Panc1 (cell line): ENCODE measurements at regions of chr2 and their contacts with region 1.

Region 1: DNA sequence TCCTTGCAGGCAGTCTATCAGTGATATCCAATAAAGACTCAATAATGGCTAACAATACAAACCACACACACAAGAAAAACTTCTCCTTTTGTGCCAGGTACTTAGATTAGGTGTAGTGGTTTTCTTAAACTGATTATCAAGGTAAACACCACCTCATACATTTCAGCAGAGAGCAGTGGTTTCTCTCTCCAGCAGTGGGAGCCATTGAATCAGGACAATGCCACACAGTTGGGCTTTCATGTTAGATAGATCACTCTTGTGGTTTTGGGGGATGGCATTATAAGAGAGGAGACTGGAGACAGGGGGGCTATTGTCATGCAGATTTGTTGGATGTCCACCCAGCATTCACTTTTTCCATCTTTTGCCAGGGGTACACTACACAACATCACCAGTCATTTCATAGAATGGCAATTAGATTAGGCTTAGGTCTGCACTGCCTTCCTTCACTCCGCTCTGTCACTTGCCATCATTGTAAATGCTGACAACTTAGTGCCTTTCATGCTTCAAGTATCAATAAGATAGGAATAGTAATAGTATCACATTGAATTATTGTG is 13.6 kb upstream of the IRS1 start:
- DNase-seq: no peak
- ATAC-seq: no peak
- H3K4me3 ChIP-seq: no peak overlapping the region
- H3K27ac ChIP-seq: no peak overlapping the region
- H3K4me1 ChIP-seq: no peaks in the 10 kb centered on the region
- H3K27me3 ChIP-seq: no peaks in the 10 kb centered on the region
- CTCF ChIP-seq: peak; percentile 67

Region 2: DNA sequence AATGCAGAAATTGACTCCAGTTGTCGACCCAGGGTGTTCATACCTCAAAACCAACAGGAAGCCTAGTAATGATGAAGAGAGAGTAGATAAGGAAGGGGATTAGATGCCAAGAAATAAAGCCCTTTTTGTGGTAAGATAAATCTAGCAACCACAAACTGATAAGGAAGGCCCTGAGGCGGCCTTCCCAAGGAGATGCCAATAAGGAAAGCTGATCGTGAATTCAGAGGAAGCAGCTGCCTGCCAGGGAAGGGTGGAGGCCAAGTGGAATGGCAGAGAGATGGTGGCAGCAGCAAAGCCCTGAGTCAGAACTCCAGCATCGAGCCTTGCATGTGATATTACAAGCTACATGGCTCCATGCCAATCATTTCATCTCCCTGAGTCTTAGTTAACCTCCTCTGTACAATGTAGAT is 139.9 kb before region 1 on chr2:
- CTCF ChIA-PET with region 1: no interaction called
- POLR2A ChIA-PET with region 1: no interaction called
- in situ Hi-C with region 1: no loop called
- intact Hi-C with region 1: no loop called
- DNase-seq: no peak
- ATAC-seq: peak; percentile 66
- H3K4me3 ChIP-seq: no peak overlapping the region
- H3K27ac ChIP-seq: no peak overlapping the region; the same call in 1 of the 2 replicates
- H3K4me1 ChIP-seq: no peaks in the 10 kb centered on the region
- H3K27me3 ChIP-seq: no peaks in the 10 kb centered on the region
- CTCF ChIP-seq: no peak

Region 3: DNA sequence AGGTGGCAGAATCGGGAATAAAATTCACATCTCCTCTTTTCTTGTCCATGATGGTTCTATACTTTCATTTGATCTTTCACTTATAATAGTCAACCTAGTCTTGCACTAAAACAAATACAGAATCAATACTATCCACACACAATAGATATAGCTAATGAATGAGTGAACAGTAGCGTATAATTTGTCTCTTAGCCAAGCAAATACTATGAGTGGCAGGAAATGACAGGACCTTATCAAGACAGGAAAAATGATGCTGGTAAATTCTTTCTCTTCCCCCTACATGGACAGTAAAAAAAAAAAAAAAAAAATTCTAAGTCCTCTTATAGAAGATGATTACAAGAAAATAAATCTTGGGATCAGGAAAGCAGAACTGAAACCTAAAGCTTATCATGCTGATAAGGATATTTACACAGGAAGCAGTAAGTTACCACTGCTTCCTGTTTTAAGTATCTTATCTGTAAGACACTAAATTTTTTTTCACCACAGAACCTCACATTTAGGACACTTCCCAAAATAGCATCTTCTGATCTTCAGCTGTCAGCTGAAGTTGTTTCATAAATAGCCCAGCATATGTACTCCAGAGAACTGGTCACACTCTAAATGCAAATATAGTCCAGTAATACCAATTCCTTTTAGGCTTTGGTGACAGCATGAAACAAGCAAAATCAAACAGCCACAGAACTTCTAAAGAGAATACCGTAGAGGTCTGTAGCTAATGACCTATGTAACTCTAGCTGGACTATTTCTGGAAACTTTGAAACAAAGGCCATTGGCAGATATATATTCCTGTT is 40.6 kb before region 1 on chr2:
- CTCF ChIA-PET with region 1: no interaction called
- POLR2A ChIA-PET with region 1: no interaction called
- in situ Hi-C with region 1: no loop called
- intact Hi-C with region 1: no loop called
- DNase-seq: no peak
- ATAC-seq: no peak
- H3K4me3 ChIP-seq: no peak overlapping the region
- H3K27ac ChIP-seq: no peak overlapping the region; the same call in 1 of the 2 replicates
- H3K4me1 ChIP-seq: peaks cover 7% of the 10 kb centered on the region; the same call in 1 of the 2 replicates
- H3K27me3 ChIP-seq: no peaks in the 10 kb centered on the region
- CTCF ChIP-seq: no peak

Region 4: GRCh38 chr2:226904592-226904991 is 91.4 kb after region 1 on chr2:
- CTCF ChIA-PET with region 1: interaction called, 12 read pairs
- POLR2A ChIA-PET with region 1: no interaction called
- in situ Hi-C with region 1: no loop called
- intact Hi-C with region 1: no loop called
- DNase-seq: no peak
- ATAC-seq: no peak
- H3K4me3 ChIP-seq: no peak overlapping the region
- H3K27ac ChIP-seq: no peak overlapping the region
- H3K4me1 ChIP-seq: no peaks in the 10 kb centered on the region
- H3K27me3 ChIP-seq: no peaks in the 10 kb centered on the region
- CTCF ChIP-seq: no peak

Region 5: GRCh38 chr2:226984750-226985582 is 171.7 kb after region 1 on chr2:
- CTCF ChIA-PET with region 1: no interaction called
- POLR2A ChIA-PET with region 1: no interaction called
- in situ Hi-C with region 1: no loop called
- intact Hi-C with region 1: loop called (anchors 2 kb)
- DNase-seq: peak; percentile 27
- ATAC-seq: peak; percentile 86
- H3K4me3 ChIP-seq: no peak overlapping the region
- H3K27ac ChIP-seq: no peak overlapping the region
- H3K4me1 ChIP-seq: no peaks in the 10 kb centered on the region
- H3K27me3 ChIP-seq: no peaks in the 10 kb centered on the region
- CTCF ChIP-seq: peak; percentile 80